PC-3 (cell line): ENCODE measurements at regions of chr3 and their contacts with region 1.

Region 1: GRCh38 chr3:11136871-11137626 is 17.2 kb upstream of the HRH1 start:
- DNase-seq: peak; percentile 99
- ATAC-seq: peak; percentile 77
- H3K4me3 ChIP-seq: peak overlapping the region; percentile 62
- H3K27ac ChIP-seq: peak overlapping the region; percentile 97
- H3K4me1 ChIP-seq: peaks cover 38% of the 10 kb centered on the region
- H3K27me3 ChIP-seq: no peaks in the 10 kb centered on the region
- CTCF ChIP-seq: no peak

Region 2: DNA sequence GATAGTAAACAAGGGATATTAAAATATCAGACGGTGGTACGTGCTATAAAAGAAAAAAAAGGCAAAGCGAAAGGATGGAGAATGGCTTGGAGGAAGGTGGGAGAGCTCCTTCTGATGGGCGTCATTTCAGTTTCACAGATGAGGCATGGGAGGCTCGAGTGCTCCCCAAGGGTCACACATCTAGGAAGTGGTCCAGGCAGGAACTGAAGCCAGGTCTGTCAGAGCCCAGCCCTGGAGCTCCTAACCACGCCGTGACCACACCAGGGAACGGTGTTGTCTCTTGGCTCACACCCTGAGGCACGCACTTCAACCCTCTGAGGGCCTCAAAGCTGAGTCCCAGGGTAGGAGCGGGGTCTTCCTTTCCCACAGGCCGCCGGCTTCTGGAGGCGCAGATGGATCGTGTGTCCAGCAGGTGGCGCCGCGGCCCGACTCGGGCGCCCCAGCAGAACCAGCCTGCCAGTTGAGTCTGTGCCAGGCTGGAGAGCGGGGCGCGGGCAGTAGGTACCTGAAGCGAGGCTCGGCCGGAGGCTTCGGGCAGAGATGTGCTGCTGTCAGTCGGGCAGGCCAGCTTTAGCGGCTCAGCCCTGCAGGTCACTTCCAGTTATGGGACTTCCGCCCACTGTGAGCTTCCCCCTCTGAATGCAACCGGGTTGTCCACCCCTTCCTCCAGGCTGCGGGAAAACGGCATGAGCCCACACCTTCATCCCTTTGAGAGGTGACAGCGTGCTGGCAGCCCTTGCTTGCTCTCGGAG is 76.4 kb before region 1 on chr3:
- CTCF ChIA-PET with region 1: interaction called, 4 read pairs
- POLR2A ChIA-PET with region 1: no interaction called
- intact Hi-C with region 1: loop called (anchors 1 kb)
- DNase-seq: peak; percentile 83
- ATAC-seq: peak; percentile 80
- H3K4me3 ChIP-seq: peak overlapping the region; percentile 44
- H3K27ac ChIP-seq: no peak overlapping the region
- H3K4me1 ChIP-seq: no peaks in the 10 kb centered on the region
- H3K27me3 ChIP-seq: no peaks in the 10 kb centered on the region
- CTCF ChIP-seq: peak; percentile 96

Region 3: GRCh38 chr3:11080492-11080891 is 56.6 kb before region 1 on chr3:
- CTCF ChIA-PET with region 1: no interaction called
- POLR2A ChIA-PET with region 1: interaction called, 6 read pairs
- intact Hi-C with region 1: loop called (anchors 1 kb)
- DNase-seq: peak; percentile 91
- ATAC-seq: peak; percentile 97
- H3K4me3 ChIP-seq: 0 out of 2 replicates have a peak overlapping the region, but pooled peaks have one; percentile 1
- H3K27ac ChIP-seq: peak overlapping the region; percentile 79
- H3K4me1 ChIP-seq: peaks cover 40% of the 10 kb centered on the region
- H3K27me3 ChIP-seq: no peaks in the 10 kb centered on the region
- CTCF ChIP-seq: no peak

Region 4: GRCh38 chr3:11096266-11097135 is 40.5 kb before region 1 on chr3:
- CTCF ChIA-PET with region 1: no interaction called
- POLR2A ChIA-PET with region 1: no interaction called
- intact Hi-C with region 1: loop called (anchors 1 kb)
- DNase-seq: peak; percentile 91
- ATAC-seq: peak; percentile 96
- H3K4me3 ChIP-seq: peak overlapping the region; percentile 62
- H3K27ac ChIP-seq: peak overlapping the region; percentile 91
- H3K4me1 ChIP-seq: peaks cover 13% of the 10 kb centered on the region
- H3K27me3 ChIP-seq: no peaks in the 10 kb centered on the region
- CTCF ChIP-seq: 0 out of 2 replicates have a peak, but pooled peaks have one; percentile 4

Region 5: DNA sequence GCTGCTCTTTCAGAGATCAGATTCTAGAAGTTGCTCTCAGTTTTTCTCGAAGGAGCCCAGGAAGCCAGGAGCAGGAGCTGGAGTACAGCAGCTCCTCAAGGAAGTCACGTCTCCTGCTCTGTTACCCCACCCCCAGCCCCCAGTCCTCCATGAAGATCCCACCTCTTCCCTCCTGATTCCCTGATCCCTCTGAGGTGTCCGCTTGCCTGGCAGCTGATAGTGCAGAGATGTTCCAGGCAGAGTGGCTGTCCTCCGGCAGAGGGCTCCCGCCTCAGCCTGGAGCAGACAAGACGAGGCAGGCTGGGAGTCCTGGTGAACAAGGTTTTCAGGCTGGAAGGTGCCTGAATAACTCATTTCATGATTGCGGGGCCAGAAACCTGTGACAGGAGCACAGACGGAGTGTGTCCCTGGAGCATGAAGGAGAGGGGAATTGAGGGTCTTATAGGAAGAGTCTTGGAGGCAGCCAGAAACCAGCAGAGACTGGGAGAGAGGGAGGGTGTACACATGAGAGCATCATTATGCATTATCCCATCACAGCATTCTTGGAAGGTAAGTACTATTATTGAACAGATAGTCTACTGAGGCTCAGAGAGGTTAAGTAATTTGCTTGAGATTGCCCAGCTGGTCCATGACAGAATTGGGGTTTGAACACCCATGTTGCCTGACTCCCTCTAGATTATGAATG is 18.4 kb after region 1 on chr3:
- CTCF ChIA-PET with region 1: interaction called, 4 read pairs
- POLR2A ChIA-PET with region 1: interaction called, 3 read pairs
- intact Hi-C with region 1: loop called (anchors 1 kb)
- DNase-seq: peak; percentile 85
- ATAC-seq: peak; percentile 89
- H3K4me3 ChIP-seq: peak overlapping the region; percentile 74
- H3K27ac ChIP-seq: no peak overlapping the region
- H3K4me1 ChIP-seq: peaks cover 12% of the 10 kb centered on the region; the same call in 1 of the 2 replicates
- H3K27me3 ChIP-seq: no peaks in the 10 kb centered on the region
- CTCF ChIP-seq: peak; percentile 92

Region 6: GRCh38 chr3:11185564-11186317 is 48.7 kb after region 1 on chr3:
- CTCF ChIA-PET with region 1: no interaction called
- POLR2A ChIA-PET with region 1: no interaction called
- intact Hi-C with region 1: loop called (anchors 1 kb)
- DNase-seq: peak; percentile 99
- ATAC-seq: peak; percentile 88
- H3K4me3 ChIP-seq: peak overlapping the region; percentile 62
- H3K27ac ChIP-seq: peak overlapping the region; percentile 78
- H3K4me1 ChIP-seq: peaks cover 28% of the 10 kb centered on the region
- H3K27me3 ChIP-seq: no peaks in the 10 kb centered on the region
- CTCF ChIP-seq: peak; percentile 53

Region 7: GRCh38 chr3:11195721-11196332 is 58.8 kb after region 1 on chr3:
- CTCF ChIA-PET with region 1: no interaction called
- POLR2A ChIA-PET with region 1: no interaction called
- intact Hi-C with region 1: loop called (anchors 1 kb)
- DNase-seq: peak; percentile 36
- ATAC-seq: peak; percentile 43
- H3K4me3 ChIP-seq: peak overlapping the region; percentile 36; the same call in 1 of the 2 replicates
- H3K27ac ChIP-seq: peak overlapping the region; percentile 89
- H3K4me1 ChIP-seq: peaks cover 37% of the 10 kb centered on the region
- H3K27me3 ChIP-seq: no peaks in the 10 kb centered on the region
- CTCF ChIP-seq: no peak